ENCODE measurements at regions of chr6 and their contacts with region 1.

Region 1: GRCh38 chr6:159726918-159727716 is at the start of gene WTAP:
- DNase-seq: peak; percentile 54
- H3K4me3 ChIP-seq: peak within 1 kb of the TSS; percentile 83
- CTCF ChIP-seq: no peak

Region 2: DNA sequence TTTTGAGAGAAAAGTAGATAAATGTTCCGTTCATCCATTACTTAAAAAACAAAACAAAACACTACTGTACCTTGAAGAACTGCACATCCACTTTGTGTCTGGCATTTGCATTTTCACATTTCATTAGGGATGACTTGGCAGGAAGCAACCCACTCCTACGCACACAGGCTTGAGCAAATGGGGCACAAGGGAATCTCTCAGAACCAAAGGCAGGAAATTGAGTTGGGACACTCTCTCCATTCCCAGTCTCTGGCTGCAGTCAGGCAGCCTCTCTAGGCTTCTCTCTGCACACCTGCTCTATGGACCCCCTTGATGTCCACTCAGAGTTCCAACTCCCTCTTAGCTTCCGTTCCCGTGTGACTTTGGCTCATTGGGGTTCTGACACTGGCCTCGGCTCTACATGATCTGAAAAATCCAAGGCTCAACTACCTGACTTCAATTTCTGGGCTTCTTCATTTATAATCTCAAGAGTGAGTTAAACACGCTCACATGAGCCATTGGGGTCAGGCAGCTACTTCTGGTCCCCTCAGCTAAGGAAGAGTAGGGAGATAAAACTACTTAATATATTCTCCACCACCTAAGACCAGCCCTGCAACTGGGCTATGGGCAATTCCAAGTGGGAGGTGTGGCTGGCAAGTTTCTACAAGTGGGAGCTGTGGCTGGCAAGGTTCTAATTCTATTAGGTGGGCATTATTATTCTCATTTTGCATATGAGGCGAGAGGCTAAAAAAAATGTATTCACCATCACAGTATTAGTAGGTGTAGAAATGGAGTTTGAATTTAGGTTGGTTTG is 286.0 kb before region 1 on chr6:
- CTCF ChIA-PET with region 1: no interaction called
- POLR2A ChIA-PET with region 1: no interaction called
- DNase-seq: no peak
- H3K4me3 ChIP-seq: no peak overlapping the region
- CTCF ChIP-seq: no peak

Region 3: DNA sequence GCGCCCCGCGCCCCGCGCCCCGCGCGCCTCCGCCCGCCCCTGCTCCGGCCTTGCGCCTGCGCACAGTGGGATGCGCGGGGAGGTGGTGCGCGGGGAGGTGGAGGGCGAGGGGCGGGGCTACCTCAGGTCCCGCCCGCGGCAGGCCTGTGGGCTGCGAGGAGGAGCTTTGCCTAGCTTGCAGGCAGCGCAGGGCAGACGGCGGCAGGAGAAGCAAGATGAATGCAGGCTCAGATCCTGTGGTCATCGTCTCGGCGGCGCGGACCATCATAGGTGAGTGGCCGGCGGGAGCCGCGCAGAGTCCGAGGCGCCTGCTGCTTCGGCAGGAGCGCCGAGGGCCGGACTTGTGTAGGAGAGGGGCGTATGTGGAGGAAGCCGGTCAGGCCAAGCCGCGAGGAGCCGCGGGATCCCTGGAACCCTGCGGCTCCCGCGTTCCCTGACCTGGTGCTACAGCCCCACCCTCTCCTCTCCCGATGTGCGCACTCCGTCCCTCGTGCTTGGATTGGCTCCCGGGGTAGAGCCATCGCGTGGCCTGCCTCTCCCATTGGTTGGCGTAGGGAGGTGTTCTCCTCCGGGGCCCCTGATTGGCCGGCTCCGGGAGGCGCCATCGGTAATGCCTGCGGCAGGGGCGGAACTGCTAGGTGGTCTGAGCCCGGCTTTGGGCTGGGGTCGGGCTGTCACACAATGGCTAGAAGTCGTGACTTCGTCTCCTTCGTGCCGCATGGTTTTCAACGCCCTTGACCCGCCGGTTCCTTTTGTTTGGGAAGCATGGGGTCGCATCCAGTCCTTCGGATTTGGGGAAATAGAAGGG is 35.0 kb after region 1 on chr6 and contains the start of gene ACAT2:
- CTCF ChIA-PET with region 1: no interaction called
- POLR2A ChIA-PET with region 1: interaction called, 15 read pairs
- DNase-seq: peak; percentile 61
- H3K4me3 ChIP-seq: peak within 1 kb of the TSS; percentile 92
- CTCF ChIP-seq: no peak